Pancreas (tissue), 10 donors: ENCODE measurements at regions of chr3 and their contacts with region 1.

Region 1: DNA sequence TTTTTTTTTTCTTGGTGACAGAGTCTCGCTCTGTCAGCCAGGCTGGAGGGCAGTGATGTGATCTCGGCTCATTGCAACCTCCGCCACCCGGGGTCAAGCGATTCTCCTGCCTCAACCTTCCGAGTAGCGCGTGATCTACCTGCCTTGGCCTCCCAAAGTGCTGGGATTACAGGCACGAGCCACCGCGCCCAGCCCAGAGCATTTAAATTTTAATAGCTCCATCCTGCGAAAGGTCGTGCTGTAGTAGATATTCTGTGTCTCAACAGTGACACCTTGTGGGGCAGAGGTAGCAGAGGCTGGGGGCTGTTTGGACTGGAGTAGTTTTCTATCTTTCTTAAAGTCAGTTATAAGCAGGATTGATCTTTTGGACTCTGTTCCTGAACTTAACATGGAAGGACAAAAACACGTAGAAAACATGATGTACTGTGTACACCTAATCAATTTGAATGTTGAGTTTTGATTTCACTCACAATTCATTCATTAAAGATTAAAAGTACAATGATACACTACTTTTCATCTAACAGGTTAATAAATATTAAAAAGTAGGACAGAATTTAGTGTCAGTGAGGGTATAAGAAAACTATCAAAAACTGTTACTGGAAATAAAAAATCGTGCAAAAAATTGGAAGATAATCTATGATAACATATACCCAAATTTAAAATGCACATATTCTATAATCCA is 11.0 kb upstream of the PDCD6IP start:
- DNase-seq: peak in 5 of 6 donors; percentile 31 to 64 (median 49)
- ATAC-seq: peak; percentile 84 to 99 (median 97)
- H3K4me3 ChIP-seq: no peak overlapping the region
- H3K27ac ChIP-seq: no peak overlapping the region
- H3K4me1 ChIP-seq: peaks cover 0 to 4% (median 0%) of the 10 kb centered on the region in 3 donors
- H3K27me3 ChIP-seq: no peaks in the 10 kb centered on the region
- CTCF ChIP-seq: peak; percentile 35 to 70 (median 62)

Region 2: GRCh38 chr3:33634262-33634661 is 153.2 kb before region 1 on chr3:
- intact Hi-C with region 1: loop called in 1 of 3 experiments (anchors 5 kb)
- DNase-seq: no peak
- ATAC-seq: no peak
- H3K4me3 ChIP-seq: no peak overlapping the region
- H3K27ac ChIP-seq: no peak overlapping the region
- H3K4me1 ChIP-seq: peaks cover 0 to 5% (median 3%) of the 10 kb centered on the region in 3 donors
- H3K27me3 ChIP-seq: no peaks in the 10 kb centered on the region
- CTCF ChIP-seq: no peak